ENCODE measurements at regions of chr2 and their contacts with region 1.

Region 1: GRCh38 chr2:196200557-196200956 is 29.2 kb upstream of the STK17B start:
- DNase-seq: peak; percentile 72
- H3K4me3 Mint-ChIP-seq: no peak overlapping the region
- H3K27ac Mint-ChIP-seq: peak overlapping the region; percentile 56
- H3K4me1 Mint-ChIP-seq: peaks cover 52% of the 10 kb centered on the region
- H3K27me3 Mint-ChIP-seq: no peaks in the 10 kb centered on the region

Region 2: DNA sequence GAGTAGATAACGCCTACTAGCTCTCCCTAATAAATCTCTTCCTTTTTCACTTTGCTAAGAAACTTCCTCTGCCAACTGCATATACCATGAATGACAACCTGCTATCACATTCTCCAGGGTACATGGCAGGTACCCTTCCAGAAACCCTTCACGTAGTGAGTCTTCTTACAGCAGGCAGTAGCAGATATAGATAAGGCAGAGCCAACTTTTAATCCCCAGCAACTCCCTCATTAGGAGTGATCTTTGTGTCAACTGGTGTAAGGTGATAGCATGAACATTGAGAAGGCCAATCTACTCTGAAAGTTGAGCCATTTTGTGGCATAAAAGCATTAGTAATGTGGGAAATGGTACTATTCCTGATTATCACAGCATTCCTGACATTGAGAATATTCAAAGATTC is 23.4 kb before region 1 on chr2:
- CTCF ChIA-PET with region 1: interaction called, 6 read pairs
- intact Hi-C with region 1: loop called (anchors 1 kb)
- DNase-seq: no peak
- H3K4me3 Mint-ChIP-seq: peak overlapping the region; percentile 71
- H3K27ac Mint-ChIP-seq: peak overlapping the region; percentile 88
- H3K4me1 Mint-ChIP-seq: peaks cover 71% of the 10 kb centered on the region
- H3K27me3 Mint-ChIP-seq: no peaks in the 10 kb centered on the region

Region 3: DNA sequence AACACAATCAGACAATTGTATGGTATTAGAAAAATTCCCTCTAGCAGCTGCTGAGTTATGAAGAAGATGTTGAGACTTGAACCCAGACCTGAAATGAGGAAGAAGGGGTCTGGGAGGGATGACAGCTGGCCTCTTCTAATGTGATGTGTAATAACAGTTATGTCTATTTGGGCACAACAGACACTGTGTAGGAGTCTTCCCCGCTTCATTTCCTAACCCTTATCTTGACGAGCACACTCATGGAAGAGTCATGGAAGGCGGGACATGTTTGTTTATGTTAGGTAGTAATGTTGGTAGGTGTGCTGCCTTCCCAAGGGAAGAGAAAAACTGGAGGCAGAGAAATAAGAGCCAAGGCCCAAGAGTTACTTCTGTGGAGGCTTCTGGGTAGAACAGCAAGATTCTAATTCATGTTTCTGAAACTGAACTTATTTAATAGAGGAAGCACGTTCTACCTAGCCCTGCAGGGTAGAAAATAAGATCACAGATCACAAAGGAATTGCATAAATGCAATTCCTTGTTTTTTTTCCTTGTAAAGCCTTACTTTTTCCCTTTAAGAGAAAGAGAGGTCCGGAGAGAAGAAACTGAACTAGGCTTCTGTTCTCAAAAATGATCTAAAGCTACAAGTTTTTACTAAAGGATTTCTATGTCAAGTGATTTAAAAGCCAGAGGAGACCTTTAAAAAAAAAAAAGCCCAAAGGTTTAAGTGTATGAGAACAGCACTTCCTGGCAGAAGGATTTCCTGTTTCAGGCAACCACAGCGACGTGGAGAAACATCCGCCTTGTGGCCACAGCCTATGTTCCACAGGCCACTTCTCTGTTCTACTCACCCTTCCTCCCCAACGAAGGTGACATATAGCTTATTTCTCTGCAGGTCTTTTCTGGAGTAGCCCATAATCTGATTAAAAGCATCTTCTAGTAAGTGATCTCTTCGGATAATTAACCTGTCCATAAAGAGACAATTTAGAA is 39.3 kb after region 1 on chr2:
- CTCF ChIA-PET with region 1: no interaction called
- intact Hi-C with region 1: loop called (anchors 1 kb)
- DNase-seq: peak; percentile 93
- H3K4me3 Mint-ChIP-seq: peak overlapping the region; percentile 49
- H3K27ac Mint-ChIP-seq: peak overlapping the region; percentile 88
- H3K4me1 Mint-ChIP-seq: peaks cover 85% of the 10 kb centered on the region
- H3K27me3 Mint-ChIP-seq: no peaks in the 10 kb centered on the region

Region 4: DNA sequence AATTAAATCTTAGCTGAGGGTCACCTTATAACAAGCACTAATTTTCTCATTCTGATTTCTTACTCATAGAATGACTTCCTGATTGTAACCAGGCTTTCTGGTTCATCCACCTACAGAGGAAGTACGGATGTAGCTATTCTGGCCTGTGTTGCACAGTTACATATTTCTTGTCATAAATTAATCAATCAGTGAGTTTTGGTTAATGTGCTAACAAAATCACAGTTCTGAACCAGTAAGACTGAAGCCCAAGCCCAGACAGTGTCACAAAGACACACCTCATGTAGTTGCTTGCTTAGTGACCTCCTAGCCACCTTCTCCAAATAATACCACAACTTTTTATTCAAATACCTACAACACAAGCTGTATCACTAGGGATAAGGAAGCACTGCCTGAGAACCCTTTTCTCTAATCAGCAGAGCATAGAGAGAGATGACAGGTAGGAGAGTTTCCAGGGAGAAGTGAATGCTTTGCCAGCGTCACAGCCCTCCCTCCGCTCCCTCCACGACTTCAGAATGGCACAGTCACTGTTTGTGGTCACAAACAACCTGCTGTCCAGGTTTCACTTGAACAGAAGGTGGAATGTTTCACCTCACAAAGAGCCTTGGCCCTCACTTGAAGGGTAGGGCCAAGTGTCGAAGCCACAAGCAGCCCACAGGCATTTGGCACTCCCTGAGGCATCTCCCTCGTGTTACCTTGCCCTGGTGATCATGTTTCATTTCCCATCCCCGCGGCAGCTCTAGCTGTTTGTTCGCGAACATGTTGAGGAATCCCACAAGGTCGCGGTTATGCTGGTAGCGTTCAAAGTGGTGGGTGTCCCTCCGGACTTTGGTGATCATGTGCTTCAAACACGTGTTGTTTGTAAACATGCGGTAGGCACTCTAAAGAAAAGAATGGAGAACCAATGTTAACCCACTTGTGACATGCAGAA is 91.6 kb after region 1 on chr2:
- CTCF ChIA-PET with region 1: no interaction called
- intact Hi-C with region 1: loop called (anchors 1 kb)
- DNase-seq: no peak
- H3K4me3 Mint-ChIP-seq: no peak overlapping the region
- H3K27ac Mint-ChIP-seq: no peak overlapping the region
- H3K4me1 Mint-ChIP-seq: peaks cover 46% of the 10 kb centered on the region
- H3K27me3 Mint-ChIP-seq: no peaks in the 10 kb centered on the region

Region 5: DNA sequence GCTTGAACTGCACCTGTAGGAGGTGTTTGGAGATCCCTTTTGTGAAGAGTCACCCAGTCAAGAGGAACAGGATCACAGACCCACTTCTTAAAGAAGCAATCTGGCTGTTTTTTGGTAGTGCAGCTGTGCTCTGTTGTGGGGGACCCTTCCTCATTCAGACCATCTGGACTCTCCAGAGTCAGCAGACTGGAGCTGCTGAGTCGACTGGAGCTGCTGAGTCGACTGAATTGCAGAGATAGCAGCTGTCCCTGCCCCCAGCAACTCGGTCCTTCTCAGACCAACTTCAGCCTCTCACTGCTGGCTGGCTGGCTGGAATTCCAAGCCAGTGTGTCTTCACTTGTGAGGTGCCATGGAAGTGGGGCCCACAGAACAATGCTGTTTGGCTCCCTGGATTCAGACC is 542.1 kb after region 1 on chr2:
- CTCF ChIA-PET with region 1: no interaction called
- intact Hi-C with region 1: no loop called
- DNase-seq: no peak
- H3K4me3 Mint-ChIP-seq: no peak overlapping the region
- H3K27ac Mint-ChIP-seq: no peak overlapping the region
- H3K4me1 Mint-ChIP-seq: no peaks in the 10 kb centered on the region
- H3K27me3 Mint-ChIP-seq: peaks cover 2% of the 10 kb centered on the region